ENCODE measurements at regions of chr4 and their contacts with region 1.

Region 1: DNA sequence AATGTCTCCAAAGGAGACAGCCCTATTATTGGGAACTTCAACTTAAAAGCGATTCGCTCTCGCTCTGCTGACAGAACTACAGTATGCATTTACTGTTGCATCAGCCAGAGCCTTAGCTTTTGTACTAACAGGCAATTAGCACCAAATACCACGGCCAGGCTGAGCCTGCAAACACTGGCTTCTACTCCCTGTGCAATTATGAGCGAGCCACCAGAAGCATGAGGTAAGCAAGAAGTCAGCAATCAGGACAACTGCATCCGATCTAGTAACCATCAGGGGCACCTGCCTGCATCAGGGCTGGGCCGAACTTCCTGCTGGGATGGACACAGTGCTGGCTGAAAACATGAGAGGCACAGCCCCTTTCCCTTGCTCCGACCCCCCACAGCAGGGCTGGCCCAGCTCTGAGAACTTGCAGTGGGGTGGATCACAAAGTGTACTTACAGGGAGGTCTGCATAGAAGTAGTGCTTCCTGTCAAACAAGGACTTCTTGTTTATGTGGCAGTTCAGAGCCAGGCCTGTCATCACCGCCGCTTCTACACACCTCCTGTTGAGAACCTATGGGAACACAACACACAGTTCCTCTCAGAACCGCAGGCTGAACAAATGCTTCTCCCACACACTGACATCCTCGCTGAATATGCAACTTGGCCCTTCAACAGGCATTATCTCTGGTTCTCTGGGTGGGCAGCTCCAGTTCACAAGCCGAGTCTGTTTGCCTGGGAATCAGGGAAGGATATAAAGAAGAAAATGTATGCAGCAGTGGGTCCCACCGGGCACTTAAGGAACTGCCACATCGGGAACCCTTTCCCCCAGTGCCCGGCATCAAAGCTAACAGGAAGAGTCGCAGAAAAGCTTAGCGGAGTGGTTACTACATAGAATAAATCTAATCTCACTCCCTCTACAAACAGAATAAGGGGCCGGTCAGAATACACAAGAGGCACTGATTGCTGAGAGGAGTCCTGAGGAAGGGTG is 41.5 kb downstream of the GATB start:
- DNase-seq: no peak
- H3K4me3 ChIP-seq: no peak overlapping the region
- H3K27ac ChIP-seq: no peak overlapping the region
- H3K4me1 ChIP-seq: no peaks in the 10 kb centered on the region
- H3K27me3 ChIP-seq: no peaks in the 10 kb centered on the region
- CTCF ChIP-seq: no peak

Region 2: GRCh38 chr4:151658959-151659600 is 60.2 kb before region 1 on chr4:
- CTCF ChIA-PET with region 1: no interaction called
- dilution Hi-C with region 1: loop called (anchors 10 kb)
- in situ Hi-C with region 1: no loop called
- intact Hi-C with region 1: no loop called
- DNase-seq: no peak
- H3K4me3 ChIP-seq: no peak overlapping the region
- H3K27ac ChIP-seq: no peak overlapping the region
- H3K4me1 ChIP-seq: no peaks in the 10 kb centered on the region
- H3K27me3 ChIP-seq: no peaks in the 10 kb centered on the region
- CTCF ChIP-seq: no peak

Region 3: DNA sequence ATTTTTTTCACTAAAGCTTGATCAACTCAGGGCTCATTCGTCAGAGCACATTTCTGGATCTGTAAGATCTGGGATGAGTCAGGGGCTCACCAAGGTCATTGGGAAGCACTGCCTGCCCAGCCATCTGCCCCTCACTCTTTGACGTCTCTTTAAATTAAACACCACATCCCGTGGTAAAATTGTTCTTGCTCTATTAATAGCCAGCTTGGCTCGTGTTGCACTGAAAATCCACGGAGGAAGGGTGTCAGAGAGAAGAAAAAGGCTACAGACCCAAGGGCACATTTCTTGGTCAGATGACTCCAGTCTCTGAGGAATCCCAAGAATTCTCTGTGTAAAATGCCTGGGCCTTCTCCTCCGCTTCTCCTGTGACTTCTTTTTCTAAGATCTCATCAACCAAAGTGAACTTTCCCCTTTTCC is 87.2 kb after region 1 on chr4:
- CTCF ChIA-PET with region 1: no interaction called
- dilution Hi-C with region 1: loop called (anchors 5 kb)
- in situ Hi-C with region 1: no loop called
- intact Hi-C with region 1: no loop called
- DNase-seq: peak; percentile 12
- H3K4me3 ChIP-seq: no peak overlapping the region
- H3K27ac ChIP-seq: no peak overlapping the region
- H3K4me1 ChIP-seq: peaks cover 5% of the 10 kb centered on the region
- H3K27me3 ChIP-seq: no peaks in the 10 kb centered on the region
- CTCF ChIP-seq: no peak

Measured in mammary epithelial cell (primary cell).